ENCODE measurements at regions of chr11 and their contacts with region 1.

Region 1: GRCh38 chr11:105611572-105612441 is 1.9 kb downstream of the GRIA4 start:
- DNase-seq: no peak

Region 2: GRCh38 chr11:105636496-105636895 is 24.7 kb after region 1 on chr11:
- intact Hi-C with region 1: loop called in 1 of 2 experiments (anchors 1 kb)
- DNase-seq: no peak

Region 3: DNA sequence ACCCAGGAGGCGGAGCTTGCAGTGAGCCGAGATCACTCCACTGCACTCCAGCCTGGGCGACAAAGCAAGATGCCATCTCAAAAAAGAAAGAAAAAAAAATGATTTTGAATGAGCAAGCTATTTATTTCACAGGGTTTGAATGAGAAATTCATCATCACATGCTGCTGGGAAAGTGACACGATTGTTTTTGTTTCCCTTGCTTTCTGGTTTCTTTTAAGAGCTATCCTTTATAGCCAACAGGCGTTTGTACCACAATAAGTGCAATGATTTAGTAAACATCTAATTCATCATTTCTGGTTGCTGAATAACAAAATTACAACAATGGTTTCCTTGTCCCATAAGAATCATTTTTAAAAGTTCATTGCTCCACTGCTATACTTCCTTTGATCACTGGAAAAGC is 1276.6 kb after region 1 on chr11:
- intact Hi-C with region 1: no loop called
- DNase-seq: no peak